ENCODE measurements at regions of chr6 and their contacts with region 1.

Region 1: GRCh38 chr6:154782193-154782592 is 49.0 kb downstream of the SCAF8 start:
- DNase-seq: no peak
- H3K4me3 Mint-ChIP-seq: no peak overlapping the region
- H3K27ac Mint-ChIP-seq: no peak overlapping the region
- H3K4me1 Mint-ChIP-seq: peaks cover 21% of the 10 kb centered on the region
- H3K27me3 Mint-ChIP-seq: no peaks in the 10 kb centered on the region

Region 2: DNA sequence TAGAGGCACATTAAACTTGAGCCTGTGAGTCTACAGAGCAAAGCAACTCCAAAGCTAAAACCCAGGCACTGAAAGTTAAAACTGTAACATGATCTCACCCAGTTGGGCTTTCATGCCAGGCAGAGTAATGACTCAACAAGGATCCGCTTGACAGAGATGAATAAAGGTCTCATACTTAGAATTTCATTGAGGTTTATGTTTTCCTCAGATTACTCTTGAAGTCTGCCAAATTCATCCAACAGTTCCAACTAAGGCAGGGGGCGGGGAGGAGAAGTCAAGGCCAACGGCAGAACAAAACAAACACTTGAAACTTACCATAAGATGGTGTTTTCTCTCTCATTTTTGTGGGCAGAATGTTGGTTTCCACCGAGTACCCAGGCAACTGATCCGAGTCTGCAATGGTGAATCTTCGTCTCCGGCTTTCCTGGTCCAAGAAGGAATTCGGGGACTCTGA is 371.5 kb before region 1 on chr6:
- intact Hi-C with region 1: no loop called
- DNase-seq: no peak
- H3K4me3 Mint-ChIP-seq: no peak overlapping the region
- H3K27ac Mint-ChIP-seq: peak overlapping the region; percentile 15
- H3K4me1 Mint-ChIP-seq: peaks cover 6% of the 10 kb centered on the region
- H3K27me3 Mint-ChIP-seq: peaks cover 6% of the 10 kb centered on the region

Region 3: DNA sequence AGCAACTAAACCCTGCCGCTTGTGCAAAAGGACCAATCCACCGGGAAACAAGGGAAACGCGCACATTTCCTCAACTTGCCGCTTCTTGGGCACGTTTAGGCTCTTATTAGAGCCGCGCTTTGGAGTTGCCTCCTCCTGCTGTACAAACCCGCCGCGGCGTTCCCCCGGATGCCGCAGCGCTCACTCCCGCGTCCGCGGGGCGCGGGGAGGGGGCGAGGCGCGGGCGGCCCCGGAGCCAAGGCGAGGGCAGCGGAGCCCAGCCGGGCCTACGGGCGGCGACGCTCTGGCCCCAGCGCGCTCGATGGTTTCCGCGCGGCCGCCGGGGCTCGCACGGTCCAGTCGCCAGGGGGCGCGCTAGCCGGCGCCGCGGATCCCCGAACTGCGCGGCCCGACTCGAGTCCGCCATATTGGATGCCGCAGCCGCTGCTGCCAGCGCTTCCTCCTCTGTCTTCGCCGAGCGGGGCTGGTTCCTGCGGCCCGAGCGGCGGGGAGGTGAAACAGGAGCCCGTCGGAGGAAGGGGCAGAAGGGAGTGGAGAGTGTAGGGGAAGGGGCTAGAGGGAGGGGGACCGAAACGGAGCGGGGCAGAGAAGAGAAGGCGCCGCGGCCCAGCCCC is 49.1 kb before region 1 on chr6 and contains the start of gene SCAF8:
- intact Hi-C with region 1: no loop called
- DNase-seq: peak; percentile 85
- H3K4me3 Mint-ChIP-seq: peak within 1 kb of the TSS; percentile 97
- H3K27ac Mint-ChIP-seq: peak within 1 kb of the TSS; percentile 96
- H3K4me1 Mint-ChIP-seq: peaks cover 33% of the 10 kb centered on the region
- H3K27me3 Mint-ChIP-seq: peaks cover 4% of the 10 kb centered on the region
- total RNA-seq, gene SCAF8: 37.7 and 40.9 TPM in 2 replicates

Region 4: DNA sequence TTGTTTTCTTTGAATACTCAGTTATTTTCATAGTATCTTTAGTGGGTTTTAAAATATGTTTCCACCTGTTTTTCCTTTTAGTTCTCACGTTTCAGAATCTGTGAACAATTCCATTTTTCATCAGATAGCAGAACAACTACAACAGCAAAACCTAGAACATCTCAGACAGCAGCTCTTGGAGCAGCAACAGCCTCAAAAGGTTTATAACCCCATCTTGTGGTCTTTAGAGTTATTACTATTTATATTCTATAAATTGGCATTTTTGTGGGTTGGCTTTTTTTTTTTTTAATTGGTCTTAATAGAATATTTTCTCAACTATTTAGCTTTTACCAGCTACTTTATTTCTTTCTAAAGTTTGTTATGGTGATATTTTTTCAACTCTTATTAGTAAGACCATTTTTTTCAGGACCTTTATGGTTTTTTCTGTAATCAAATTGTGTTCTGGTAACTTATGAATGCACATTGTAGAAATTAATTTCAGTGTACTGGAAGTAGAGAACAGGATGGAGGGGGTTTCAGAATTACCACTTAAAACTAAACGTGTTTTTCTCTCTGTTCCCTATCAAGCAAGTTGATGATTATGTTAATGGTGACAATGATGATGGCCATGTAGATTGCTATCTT is 23.2 kb after region 1 on chr6:
- intact Hi-C with region 1: loop called (anchors 2 kb)
- DNase-seq: no peak
- H3K4me3 Mint-ChIP-seq: no peak overlapping the region
- H3K27ac Mint-ChIP-seq: no peak overlapping the region
- H3K4me1 Mint-ChIP-seq: peaks cover 4% of the 10 kb centered on the region
- H3K27me3 Mint-ChIP-seq: no peaks in the 10 kb centered on the region